ENCODE measurements at regions of chr11 and their contacts with region 1.

Region 1: GRCh38 chr11:57530596-57531507 is at the start of gene TIMM10:
- DNase-seq: peak; percentile 86 to 98 (median 92)
- ATAC-seq: peak; percentile 92
- H3K4me3 ChIP-seq: peak within 1 kb of the TSS; percentile 70 to 74
- H3K4me3 Mint-ChIP-seq: peak within 1 kb of the TSS; percentile 88
- H3K27ac ChIP-seq: peak within 1 kb of the TSS; percentile 77 to 87
- H3K27ac Mint-ChIP-seq: peak within 1 kb of the TSS; percentile 94
- H3K4me1 ChIP-seq: peaks cover 19% of the 10 kb centered on the region
- H3K4me1 Mint-ChIP-seq: peaks cover 39% of the 10 kb centered on the region
- H3K27me3 ChIP-seq: no peaks in the 10 kb centered on the region
- H3K27me3 Mint-ChIP-seq: no peaks in the 10 kb centered on the region
- CTCF ChIP-seq: no peak
- total RNA-seq, gene TIMM10: 16.4 to 18.9 TPM

Region 2: GRCh38 chr11:56271092-56271491 is 1259.8 kb before region 1 on chr11:
- CTCF ChIA-PET with region 1: no interaction called
- POLR2A ChIA-PET with region 1: no interaction called
- intact Hi-C with region 1: no loop called
- DNase-seq: no peak
- ATAC-seq: no peak
- H3K4me3 ChIP-seq: no peak overlapping the region
- H3K4me3 Mint-ChIP-seq: no peak overlapping the region
- H3K27ac ChIP-seq: no peak overlapping the region
- H3K27ac Mint-ChIP-seq: no peak overlapping the region
- H3K4me1 ChIP-seq: no peaks in the 10 kb centered on the region
- H3K4me1 Mint-ChIP-seq: no peaks in the 10 kb centered on the region
- H3K27me3 ChIP-seq: no peaks in the 10 kb centered on the region
- H3K27me3 Mint-ChIP-seq: no peaks in the 10 kb centered on the region
- CTCF ChIP-seq: no peak

Region 3: GRCh38 chr11:56876621-56877275 is 654.1 kb before region 1 on chr11:
- CTCF ChIA-PET with region 1: no interaction called
- POLR2A ChIA-PET with region 1: no interaction called
- intact Hi-C with region 1: no loop called
- DNase-seq: no peak
- ATAC-seq: no peak
- H3K4me3 ChIP-seq: no peak overlapping the region
- H3K4me3 Mint-ChIP-seq: no peak overlapping the region
- H3K27ac ChIP-seq: no peak overlapping the region
- H3K27ac Mint-ChIP-seq: no peak overlapping the region
- H3K4me1 ChIP-seq: no peaks in the 10 kb centered on the region
- H3K4me1 Mint-ChIP-seq: no peaks in the 10 kb centered on the region
- H3K27me3 ChIP-seq: no peaks in the 10 kb centered on the region
- H3K27me3 Mint-ChIP-seq: no peaks in the 10 kb centered on the region
- CTCF ChIP-seq: no peak

Region 4: GRCh38 chr11:57345555-57346211 is 185.2 kb before region 1 on chr11:
- CTCF ChIA-PET with region 1: interaction called, 21 read pairs
- POLR2A ChIA-PET with region 1: no interaction called
- intact Hi-C with region 1: loop called (anchors 1 kb)
- DNase-seq: peak; percentile 45 to 85 (median 73)
- ATAC-seq: peak; percentile 93
- H3K4me3 ChIP-seq: no peak overlapping the region
- H3K4me3 Mint-ChIP-seq: no peak overlapping the region
- H3K27ac ChIP-seq: no peak overlapping the region
- H3K27ac Mint-ChIP-seq: no peak overlapping the region
- H3K4me1 ChIP-seq: no peaks in the 10 kb centered on the region
- H3K4me1 Mint-ChIP-seq: peaks cover 2% of the 10 kb centered on the region
- H3K27me3 ChIP-seq: no peaks in the 10 kb centered on the region
- H3K27me3 Mint-ChIP-seq: peaks cover 3% of the 10 kb centered on the region
- CTCF ChIP-seq: peak; percentile 80

Region 5: DNA sequence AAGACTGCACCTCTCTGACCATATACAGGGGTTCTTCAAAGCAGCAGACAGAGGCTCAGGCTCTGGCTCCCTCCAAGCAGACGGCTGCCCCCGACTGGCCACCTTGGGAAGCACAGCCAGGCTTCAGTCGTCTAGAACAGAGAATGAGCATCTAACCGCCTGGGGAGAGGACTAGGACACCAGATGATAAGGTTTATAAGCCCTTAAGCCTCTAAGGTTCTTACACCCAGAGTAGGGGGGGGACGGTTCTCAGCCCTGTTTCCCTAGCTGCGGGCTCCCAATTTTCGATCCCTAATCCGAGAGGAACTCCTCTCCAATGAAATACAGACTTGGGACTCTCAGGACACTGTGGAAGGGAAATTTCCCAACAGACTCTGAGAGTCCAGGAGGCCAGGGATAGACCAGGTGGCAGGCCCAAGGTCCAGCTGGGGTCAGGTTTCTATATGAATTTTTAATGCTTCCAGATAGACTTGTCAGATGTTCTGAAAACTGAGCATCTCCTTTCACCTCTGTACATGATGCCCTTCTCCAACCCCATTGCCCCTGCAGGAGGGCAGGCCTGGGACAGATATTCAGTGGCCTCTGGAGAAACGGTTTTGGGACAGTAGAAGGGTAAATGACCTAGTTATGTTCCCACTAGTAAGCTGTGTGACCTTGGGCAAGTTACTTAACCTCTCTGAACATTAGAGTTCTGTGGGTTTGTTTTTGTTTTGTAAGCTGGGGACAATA is 50.3 kb before region 1 on chr11:
- CTCF ChIA-PET with region 1: interaction called, 50 read pairs
- POLR2A ChIA-PET with region 1: interaction called, 4 read pairs
- intact Hi-C with region 1: no loop called
- DNase-seq: peak in 8 of 9 experiments; percentile 43 to 74 (median 65)
- ATAC-seq: peak; percentile 51
- H3K4me3 ChIP-seq: no peak overlapping the region
- H3K4me3 Mint-ChIP-seq: no peak overlapping the region
- H3K27ac ChIP-seq: no peak overlapping the region
- H3K27ac Mint-ChIP-seq: no peak overlapping the region
- H3K4me1 ChIP-seq: peaks cover 14% of the 10 kb centered on the region
- H3K4me1 Mint-ChIP-seq: peaks cover 26% of the 10 kb centered on the region
- H3K27me3 ChIP-seq: peaks cover 4 to 10% of the 10 kb centered on the region in 2 experiments
- H3K27me3 Mint-ChIP-seq: peaks cover 10% of the 10 kb centered on the region
- CTCF ChIP-seq: peak; percentile 56

Region 6: GRCh38 chr11:57515332-57516060 is 15.4 kb before region 1 on chr11 and contains the start of gene SLC43A1:
- CTCF ChIA-PET with region 1: interaction called, 130 read pairs
- POLR2A ChIA-PET with region 1: interaction called, 14 read pairs
- intact Hi-C with region 1: loop called in 1 of 2 experiments (anchors 1 kb)
- DNase-seq: peak in 5 of 9 experiments; percentile 13 to 56 (median 35)
- ATAC-seq: peak; percentile 29
- H3K4me3 ChIP-seq: peak within 1 kb of the TSS; percentile 82 to 90
- H3K4me3 Mint-ChIP-seq: peak within 1 kb of the TSS; percentile 98
- H3K27ac ChIP-seq: peak within 1 kb of the TSS; percentile 46 to 48
- H3K27ac Mint-ChIP-seq: peak within 1 kb of the TSS; percentile 82
- H3K4me1 ChIP-seq: peaks cover 27% of the 10 kb centered on the region
- H3K4me1 Mint-ChIP-seq: peaks cover 32% of the 10 kb centered on the region
- H3K27me3 ChIP-seq: no peaks in the 10 kb centered on the region
- H3K27me3 Mint-ChIP-seq: no peaks in the 10 kb centered on the region
- CTCF ChIP-seq: no peak
- total RNA-seq, gene SLC43A1: 4.4 to 7.5 TPM

Region 7: GRCh38 chr11:57588046-57588710 is 57.3 kb after region 1 on chr11:
- CTCF ChIA-PET with region 1: no interaction called
- POLR2A ChIA-PET with region 1: no interaction called
- intact Hi-C with region 1: no loop called
- DNase-seq: no peak
- ATAC-seq: no peak
- H3K4me3 ChIP-seq: no peak overlapping the region
- H3K4me3 Mint-ChIP-seq: no peak overlapping the region
- H3K27ac ChIP-seq: no peak overlapping the region
- H3K27ac Mint-ChIP-seq: no peak overlapping the region
- H3K4me1 ChIP-seq: no peaks in the 10 kb centered on the region
- H3K4me1 Mint-ChIP-seq: no peaks in the 10 kb centered on the region
- H3K27me3 ChIP-seq: no peaks in the 10 kb centered on the region
- H3K27me3 Mint-ChIP-seq: no peaks in the 10 kb centered on the region
- CTCF ChIP-seq: no peak

Region 8: DNA sequence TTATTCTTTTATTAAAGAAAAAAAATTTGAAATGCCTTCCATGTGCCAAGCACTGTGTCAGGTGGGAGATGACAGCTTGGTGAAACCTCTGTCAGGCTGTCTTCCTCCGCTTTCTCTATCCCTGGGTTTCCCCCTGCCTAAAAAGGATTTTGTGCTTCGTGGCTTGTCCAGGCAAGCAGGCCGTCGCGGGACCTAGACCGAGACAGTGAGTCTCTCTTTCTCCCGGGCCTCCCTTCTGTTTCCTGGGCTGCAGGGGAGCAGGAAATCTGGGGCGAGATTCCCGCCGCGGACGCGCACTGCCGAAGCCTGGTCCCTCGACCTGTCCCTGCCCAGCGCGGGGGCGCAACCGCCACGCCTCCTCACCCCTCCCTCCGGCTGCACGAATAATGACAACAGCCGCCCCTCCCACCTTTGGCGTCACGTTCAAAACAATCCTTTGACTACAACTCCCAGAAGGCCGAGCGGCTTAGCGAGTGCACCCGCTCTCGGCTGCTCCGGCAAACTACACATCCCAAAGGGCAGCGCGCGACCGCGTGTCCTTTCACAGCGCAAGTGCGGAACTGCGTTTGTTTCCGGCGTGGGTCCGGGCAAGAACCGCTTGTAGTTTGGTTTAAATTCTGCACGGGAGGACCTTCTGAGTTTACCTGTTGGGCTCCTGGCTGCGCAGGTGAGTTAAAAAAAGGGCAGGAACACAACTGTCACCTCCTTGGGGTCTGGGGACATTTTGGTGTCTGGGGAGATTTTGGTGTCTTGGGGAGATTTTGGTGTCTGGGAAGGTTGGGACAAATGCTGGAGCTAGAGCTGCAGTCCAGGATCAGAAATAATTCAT is 126.6 kb after region 1 on chr11 and contains the start of gene CLP1:
- CTCF ChIA-PET with region 1: interaction called, 5 read pairs
- POLR2A ChIA-PET with region 1: no interaction called
- intact Hi-C with region 1: loop called (anchors 1 kb)
- DNase-seq: peak; percentile 97 to 100 (median 99)
- ATAC-seq: peak; percentile 94
- H3K4me3 ChIP-seq: peak within 1 kb of the TSS; percentile 59 to 74
- H3K4me3 Mint-ChIP-seq: peak within 1 kb of the TSS; percentile 94
- H3K27ac ChIP-seq: peak within 1 kb of the TSS; percentile 83
- H3K27ac Mint-ChIP-seq: peak within 1 kb of the TSS; percentile 90
- H3K4me1 ChIP-seq: peaks cover 11% of the 10 kb centered on the region
- H3K4me1 Mint-ChIP-seq: peaks cover 43% of the 10 kb centered on the region
- H3K27me3 ChIP-seq: no peaks in the 10 kb centered on the region
- H3K27me3 Mint-ChIP-seq: no peaks in the 10 kb centered on the region
- CTCF ChIP-seq: no peak
- total RNA-seq, gene CLP1: 22.7 to 27.1 TPM

Region 9: GRCh38 chr11:57800444-57801182 is 269.8 kb after region 1 on chr11:
- CTCF ChIA-PET with region 1: interaction called, 9 read pairs
- POLR2A ChIA-PET with region 1: no interaction called
- intact Hi-C with region 1: loop called in 1 of 2 experiments (anchors 2 kb)
- DNase-seq: peak in 4 of 9 experiments; percentile 17 to 82 (median 62)
- ATAC-seq: peak; percentile 97
- H3K4me3 ChIP-seq: no peak overlapping the region
- H3K4me3 Mint-ChIP-seq: no peak overlapping the region
- H3K27ac ChIP-seq: peak overlapping the region in 1 of 2 experiments; percentile 59
- H3K27ac Mint-ChIP-seq: peak overlapping the region; percentile 83
- H3K4me1 ChIP-seq: peaks cover 22% of the 10 kb centered on the region
- H3K4me1 Mint-ChIP-seq: peaks cover 20% of the 10 kb centered on the region
- H3K27me3 ChIP-seq: no peaks in the 10 kb centered on the region
- H3K27me3 Mint-ChIP-seq: no peaks in the 10 kb centered on the region
- CTCF ChIP-seq: peak; percentile 94

Region 10: DNA sequence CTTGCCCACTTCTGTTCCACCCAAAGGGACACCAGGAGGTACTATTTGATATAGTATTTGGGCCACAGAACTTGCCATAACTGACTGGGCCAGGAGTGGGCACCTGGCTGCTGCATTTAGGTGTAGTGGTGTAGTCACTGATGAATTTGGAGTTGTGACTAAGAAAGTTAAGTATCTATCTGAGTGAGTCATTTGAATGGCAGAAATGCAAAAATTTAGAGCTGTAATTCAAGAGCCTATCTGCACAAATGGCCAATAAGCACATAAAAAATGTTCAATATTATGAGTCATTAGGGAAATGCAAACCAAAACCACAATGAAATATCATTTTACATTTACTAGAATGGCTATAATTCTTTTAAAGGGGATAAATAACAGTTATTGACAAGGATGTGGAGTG is 1298.9 kb after region 1 on chr11:
- CTCF ChIA-PET with region 1: no interaction called
- POLR2A ChIA-PET with region 1: no interaction called
- intact Hi-C with region 1: no loop called
- DNase-seq: no peak
- ATAC-seq: no peak
- H3K4me3 ChIP-seq: no peak overlapping the region
- H3K4me3 Mint-ChIP-seq: no peak overlapping the region
- H3K27ac ChIP-seq: no peak overlapping the region
- H3K27ac Mint-ChIP-seq: no peak overlapping the region
- H3K4me1 ChIP-seq: no peaks in the 10 kb centered on the region
- H3K4me1 Mint-ChIP-seq: no peaks in the 10 kb centered on the region
- H3K27me3 ChIP-seq: no peaks in the 10 kb centered on the region
- H3K27me3 Mint-ChIP-seq: peaks cover 14% of the 10 kb centered on the region
- CTCF ChIP-seq: no peak